Activated naive CD4-positive, alpha-beta T cell treated with anti-CD3 and anti-CD28 coated beads for 36 hours (primary cell): ENCODE measurements at regions of chr2 and their contacts with region 1.

Region 1: GRCh38 chr2:222295368-222296062 is 3.3 kb downstream of the PAX3 start:
- DNase-seq: no peak
- H3K4me3 Mint-ChIP-seq: peak overlapping the region; percentile 29
- H3K27ac Mint-ChIP-seq: no peak overlapping the region
- H3K4me1 Mint-ChIP-seq: peaks cover 28% of the 10 kb centered on the region
- H3K27me3 Mint-ChIP-seq: peaks cover 89% of the 10 kb centered on the region

Region 2: GRCh38 chr2:221549143-221549542 is 746.4 kb before region 1 on chr2:
- CTCF ChIA-PET with region 1: no interaction called
- intact Hi-C with region 1: no loop called
- DNase-seq: no peak
- H3K4me3 Mint-ChIP-seq: no peak overlapping the region
- H3K27ac Mint-ChIP-seq: no peak overlapping the region
- H3K4me1 Mint-ChIP-seq: peaks cover 4% of the 10 kb centered on the region
- H3K27me3 Mint-ChIP-seq: no peaks in the 10 kb centered on the region

Region 3: DNA sequence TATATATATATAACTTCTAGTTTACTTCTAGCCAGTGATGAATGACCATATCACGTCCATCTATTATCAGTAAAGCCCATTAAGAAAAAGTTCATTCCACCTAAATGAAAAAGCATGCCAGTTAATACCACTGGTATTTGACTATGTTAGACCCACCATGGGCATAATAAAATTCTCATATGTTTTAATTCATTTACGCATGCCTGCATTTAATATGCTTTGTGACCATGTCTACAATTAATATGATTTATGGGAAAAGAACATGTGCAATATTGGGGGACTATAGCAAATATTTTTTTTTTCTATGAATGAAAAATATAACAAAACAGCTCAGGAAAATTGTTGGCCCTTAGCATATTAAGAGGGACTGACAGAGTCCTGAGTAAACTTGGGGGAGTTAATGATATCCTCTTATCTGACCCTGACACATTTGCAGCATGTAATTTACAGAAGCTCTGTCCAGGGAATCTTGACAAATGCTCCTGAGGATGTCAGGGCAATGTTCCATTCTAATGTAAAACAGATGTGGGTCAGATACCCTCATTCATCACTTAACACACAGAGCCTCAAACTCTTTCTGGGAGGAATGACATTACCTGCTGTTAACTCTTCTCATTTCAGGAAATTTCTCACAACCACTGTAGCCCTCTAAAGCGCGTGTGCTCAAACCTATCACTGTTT is 87.4 kb before region 1 on chr2:
- CTCF ChIA-PET with region 1: no interaction called
- intact Hi-C with region 1: no loop called
- DNase-seq: no peak
- H3K4me3 Mint-ChIP-seq: no peak overlapping the region
- H3K27ac Mint-ChIP-seq: no peak overlapping the region
- H3K4me1 Mint-ChIP-seq: no peaks in the 10 kb centered on the region
- H3K27me3 Mint-ChIP-seq: no peaks in the 10 kb centered on the region

Region 4: DNA sequence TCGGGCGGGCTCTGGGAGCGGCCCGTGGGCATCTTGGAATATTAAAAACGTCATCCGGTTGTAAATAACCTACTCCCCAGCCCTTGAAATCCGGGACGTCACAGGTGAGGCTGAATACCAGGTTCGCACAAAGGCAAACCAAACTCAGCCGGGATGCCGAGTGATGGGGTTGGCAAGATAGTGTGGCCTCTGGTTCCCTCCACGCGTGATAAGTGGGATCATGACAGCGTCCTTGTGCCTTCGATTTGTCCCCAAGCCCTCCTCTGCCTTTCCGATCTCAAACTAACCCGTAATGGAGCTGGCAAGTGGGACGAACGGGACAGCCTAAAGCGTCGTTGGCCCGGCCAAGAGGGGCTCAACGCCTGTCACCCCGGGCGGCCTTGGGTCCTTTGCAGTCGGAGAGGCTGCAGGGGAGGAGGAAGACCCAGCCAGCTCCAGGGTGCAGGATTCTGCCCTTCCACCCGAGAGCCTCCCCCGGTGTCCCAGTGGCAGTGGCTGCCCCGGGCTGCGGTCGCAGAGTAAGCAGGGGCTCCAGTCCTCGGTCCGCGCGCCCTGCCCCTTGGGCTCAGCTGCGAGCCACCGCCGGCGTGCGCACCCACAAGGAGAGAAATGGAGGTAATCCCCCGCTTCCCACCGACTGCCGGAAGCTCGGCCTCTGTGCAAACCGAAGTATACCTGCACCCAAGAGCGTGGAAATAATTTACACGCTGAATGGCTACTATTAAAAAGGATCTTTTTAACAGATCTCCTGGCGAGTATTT is 16.6 kb after region 1 on chr2:
- CTCF ChIA-PET with region 1: interaction called, 3 read pairs
- intact Hi-C with region 1: loop called (anchors 2 kb)
- DNase-seq: no peak
- H3K4me3 Mint-ChIP-seq: no peak overlapping the region
- H3K27ac Mint-ChIP-seq: no peak overlapping the region
- H3K4me1 Mint-ChIP-seq: peaks cover 8% of the 10 kb centered on the region
- H3K27me3 Mint-ChIP-seq: peaks cover 87% of the 10 kb centered on the region

Region 5: DNA sequence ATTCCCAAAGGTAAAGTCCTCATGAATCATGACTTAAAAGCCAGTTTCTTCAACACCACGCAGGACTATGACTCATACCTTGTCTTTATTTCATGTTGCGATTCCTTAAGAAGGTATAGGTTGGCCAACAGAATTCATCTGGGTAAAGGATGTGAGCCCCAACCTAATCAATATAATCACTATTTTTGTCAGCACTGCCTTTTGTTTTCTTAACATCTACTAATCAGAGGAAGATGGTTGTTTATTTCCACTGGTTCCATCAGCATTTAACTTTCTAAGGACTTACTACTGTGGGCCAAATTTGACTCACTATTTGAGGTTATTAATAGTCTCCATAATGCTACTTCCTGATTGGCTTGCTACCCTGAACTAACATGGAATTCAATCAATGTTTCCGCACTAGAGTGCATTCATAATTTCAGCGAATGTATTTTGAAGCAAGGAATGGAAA is 1228.1 kb after region 1 on chr2:
- CTCF ChIA-PET with region 1: no interaction called
- intact Hi-C with region 1: no loop called
- DNase-seq: no peak
- H3K4me3 Mint-ChIP-seq: no peak overlapping the region
- H3K27ac Mint-ChIP-seq: no peak overlapping the region
- H3K4me1 Mint-ChIP-seq: no peaks in the 10 kb centered on the region
- H3K27me3 Mint-ChIP-seq: no peaks in the 10 kb centered on the region